Left colon (tissue), 2 donors: ENCODE measurements at regions of chr14 and their contacts with region 1.

Region 1: DNA sequence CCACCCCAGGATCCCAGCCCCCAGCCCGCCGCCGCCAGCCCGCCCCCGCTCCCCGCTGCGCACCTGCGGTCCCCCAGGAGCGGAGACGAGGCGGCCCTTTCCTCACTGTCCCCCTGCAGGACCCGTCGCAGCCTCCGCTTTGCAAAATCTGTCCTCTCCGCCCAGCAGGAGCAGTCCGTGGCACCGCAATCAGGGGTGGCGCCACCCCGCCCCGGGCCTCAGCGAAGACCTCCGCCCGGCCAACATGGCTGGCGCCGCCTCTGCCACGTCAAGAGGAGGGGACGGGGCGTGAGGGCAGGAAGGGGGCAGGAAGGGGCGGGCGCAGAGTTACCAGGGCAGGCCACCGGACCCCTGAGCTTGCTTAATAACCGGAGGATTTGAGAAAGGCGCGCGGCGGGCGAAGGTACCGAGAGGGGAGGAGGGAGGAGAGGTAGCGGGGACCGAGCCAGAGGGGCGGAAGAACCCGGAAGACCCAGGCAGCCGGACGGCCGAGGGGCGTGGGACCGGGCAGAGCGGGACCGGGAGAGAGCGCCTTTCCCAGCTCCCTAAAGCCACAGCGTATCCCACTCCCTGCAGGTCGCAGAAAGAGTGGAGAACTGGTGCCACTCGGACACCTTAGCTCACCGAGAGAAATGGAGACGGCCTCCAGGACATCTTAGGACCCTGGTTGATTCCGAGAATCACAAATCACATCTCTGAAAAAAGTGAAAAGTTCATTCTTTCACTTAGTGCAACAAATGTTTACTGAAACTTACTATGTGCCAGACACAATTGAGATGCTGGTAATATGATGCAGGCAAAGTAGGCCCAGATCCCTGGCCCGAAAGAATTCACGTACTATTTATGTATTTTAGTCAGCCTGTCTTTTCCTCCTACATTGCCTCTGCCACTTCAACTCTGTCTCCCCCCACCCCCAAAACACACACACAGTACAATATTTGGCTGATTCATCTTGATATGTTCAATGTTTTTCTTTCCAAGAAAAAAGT is at the start of gene SEC23A:
- DNase-seq: peak; percentile 94 to 95
- ATAC-seq: peak; percentile 88
- total RNA-seq, gene SEC23A: 111 to 121 TPM

Region 2: GRCh38 chr14:38824706-38825105 is 278.6 kb before region 1 on chr14:
- intact Hi-C with region 1: no loop called
- DNase-seq: no peak
- ATAC-seq: no peak

Region 3: GRCh38 chr14:39266871-39267591 is 163.8 kb after region 1 on chr14:
- intact Hi-C with region 1: loop called in 1 of 2 experiments (anchors 10 kb)
- DNase-seq: peak; percentile 88
- ATAC-seq: peak; percentile 90